Motor neuron (in vitro differentiated cells): ENCODE measurements at regions of chr14 and their contacts with region 1.

Region 1: DNA sequence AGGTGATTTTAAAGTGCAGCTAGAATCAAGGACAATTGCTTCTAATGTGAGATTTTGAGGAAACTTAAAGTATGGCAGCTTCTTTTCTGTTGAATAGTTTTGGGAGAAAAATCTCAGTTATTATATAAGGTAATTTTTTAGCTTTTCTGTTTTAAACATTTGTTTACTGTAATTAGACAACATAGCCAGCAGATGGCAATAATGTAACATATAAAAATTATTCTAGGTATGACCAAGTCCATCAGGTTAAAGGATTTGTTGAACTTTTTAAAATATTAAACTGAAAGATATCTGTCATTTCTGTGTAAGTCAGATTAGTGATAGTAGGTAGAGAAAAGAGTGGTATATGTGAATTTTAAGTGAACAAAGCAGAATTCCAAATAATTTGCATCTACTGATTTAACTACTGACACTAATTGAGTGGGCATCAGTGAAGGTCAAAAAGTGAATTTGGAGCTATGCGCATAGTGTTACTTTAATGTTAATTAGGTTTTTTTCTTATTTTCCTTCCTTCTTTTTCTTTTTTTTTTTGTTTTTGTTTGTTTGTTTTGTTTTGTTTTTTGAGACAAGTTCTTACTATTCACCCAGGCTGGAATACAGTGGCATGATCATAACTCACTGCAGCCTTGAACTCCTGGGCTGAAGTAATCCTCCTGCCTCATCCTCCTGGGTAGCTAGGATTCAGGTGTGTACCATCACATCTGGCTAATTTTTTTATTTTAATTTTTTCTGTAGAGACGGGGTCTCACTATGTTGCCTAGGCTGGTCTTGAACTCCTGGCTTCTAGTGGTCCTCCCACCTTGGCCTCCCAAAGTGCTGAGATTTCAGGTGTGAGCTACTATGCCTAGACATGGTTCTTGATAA is 18.6 kb downstream of the PRORP start:
- ATAC-seq: peak in 2 of 8 experiments; percentile 19 to 56
- H3K4me3 ChIP-seq: no peak overlapping the region
- H3K27ac ChIP-seq: no peak overlapping the region
- H3K4me1 ChIP-seq: no peaks in the 10 kb centered on the region

Region 2: DNA sequence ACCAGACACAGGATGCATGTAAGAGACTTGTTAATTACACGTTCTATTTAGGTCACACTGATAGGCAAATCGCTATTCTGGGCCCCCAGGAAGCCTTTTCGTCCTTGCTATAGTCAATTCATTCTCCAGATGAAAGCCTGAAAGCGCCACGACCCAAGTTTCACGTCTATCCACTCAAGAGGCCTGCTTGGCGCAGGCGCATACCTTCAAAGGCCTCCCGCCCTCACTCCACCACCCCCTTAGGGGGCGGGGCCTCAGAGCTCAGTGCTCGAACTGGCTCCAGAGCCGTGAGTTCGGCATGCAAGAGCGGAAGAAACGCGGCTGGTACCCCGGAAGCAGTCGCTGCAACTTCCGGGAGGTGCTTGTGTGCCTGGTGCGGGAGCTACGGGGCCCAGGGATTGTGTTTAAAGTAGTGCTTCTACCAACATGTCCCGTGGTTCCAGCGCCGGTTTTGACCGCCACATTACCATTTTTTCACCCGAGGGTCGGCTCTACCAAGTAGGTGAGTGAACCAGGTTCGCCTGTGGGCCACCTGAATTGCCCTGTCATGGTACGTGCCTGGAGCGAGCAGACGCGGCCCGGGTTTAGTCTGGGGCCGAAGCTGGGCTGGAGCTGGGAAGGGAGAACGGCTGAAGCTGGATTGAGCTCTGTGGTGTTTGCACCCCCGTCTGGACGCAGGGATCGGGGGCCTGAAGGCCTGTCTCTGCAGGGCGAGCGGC is 151.3 kb after region 1 on chr14 and contains the start of gene PSMA6:
- in situ Hi-C with region 1: loop called in 1 of 9 experiments (anchors 25 kb)
- ATAC-seq: peak; percentile 81 to 98 (median 97)
- H3K4me3 ChIP-seq: peak within 1 kb of the TSS; percentile 60 to 85 (median 81)
- H3K27ac ChIP-seq: peak within 1 kb of the TSS; percentile 90 to 95
- H3K4me1 ChIP-seq: peaks cover 14% of the 10 kb centered on the region in 2 donors
- total RNA-seq, gene PSMA6: 224 to 1,035 (median 262) TPM